CD4-positive, alpha-beta memory T cell (primary cell): ENCODE measurements at regions of chr5 and their contacts with region 1.

Region 1: GRCh38 chr5:76582230-76583162 is 40.7 kb downstream of the F2RL2 start:
- DNase-seq: no peak
- H3K4me3 ChIP-seq: no peak overlapping the region
- H3K4me3 Mint-ChIP-seq: no peak overlapping the region
- H3K27ac ChIP-seq: no peak overlapping the region
- H3K27ac Mint-ChIP-seq: peak overlapping the region in 6 of 7 donors; percentile 12 to 76 (median 46)
- H3K4me1 ChIP-seq: peaks cover 16% of the 10 kb centered on the region
- H3K4me1 Mint-ChIP-seq: peaks cover 13 to 37% (median 18%) of the 10 kb centered on the region in 4 donors
- H3K27me3 ChIP-seq: no peaks in the 10 kb centered on the region
- H3K27me3 Mint-ChIP-seq: no peaks in the 10 kb centered on the region

Region 2: GRCh38 chr5:76074487-76075065 is 507.9 kb before region 1 on chr5:
- CTCF ChIA-PET with region 1: interaction called, 6 read pairs
- POLR2A ChIA-PET with region 1: no interaction called
- intact Hi-C with region 1: loop called (anchors 5 kb)
- DNase-seq: peak in 3 of 5 donors; percentile 22 to 31 (median 24)
- H3K4me3 ChIP-seq: no peak overlapping the region
- H3K4me3 Mint-ChIP-seq: no peak overlapping the region
- H3K27ac ChIP-seq: no peak overlapping the region
- H3K27ac Mint-ChIP-seq: no peak overlapping the region
- H3K4me1 ChIP-seq: no peaks in the 10 kb centered on the region
- H3K4me1 Mint-ChIP-seq: no peaks in the 10 kb centered on the region
- H3K27me3 ChIP-seq: no peaks in the 10 kb centered on the region
- H3K27me3 Mint-ChIP-seq: peaks cover 18 to 53% of the 10 kb centered on the region in 2 donors

Region 3: DNA sequence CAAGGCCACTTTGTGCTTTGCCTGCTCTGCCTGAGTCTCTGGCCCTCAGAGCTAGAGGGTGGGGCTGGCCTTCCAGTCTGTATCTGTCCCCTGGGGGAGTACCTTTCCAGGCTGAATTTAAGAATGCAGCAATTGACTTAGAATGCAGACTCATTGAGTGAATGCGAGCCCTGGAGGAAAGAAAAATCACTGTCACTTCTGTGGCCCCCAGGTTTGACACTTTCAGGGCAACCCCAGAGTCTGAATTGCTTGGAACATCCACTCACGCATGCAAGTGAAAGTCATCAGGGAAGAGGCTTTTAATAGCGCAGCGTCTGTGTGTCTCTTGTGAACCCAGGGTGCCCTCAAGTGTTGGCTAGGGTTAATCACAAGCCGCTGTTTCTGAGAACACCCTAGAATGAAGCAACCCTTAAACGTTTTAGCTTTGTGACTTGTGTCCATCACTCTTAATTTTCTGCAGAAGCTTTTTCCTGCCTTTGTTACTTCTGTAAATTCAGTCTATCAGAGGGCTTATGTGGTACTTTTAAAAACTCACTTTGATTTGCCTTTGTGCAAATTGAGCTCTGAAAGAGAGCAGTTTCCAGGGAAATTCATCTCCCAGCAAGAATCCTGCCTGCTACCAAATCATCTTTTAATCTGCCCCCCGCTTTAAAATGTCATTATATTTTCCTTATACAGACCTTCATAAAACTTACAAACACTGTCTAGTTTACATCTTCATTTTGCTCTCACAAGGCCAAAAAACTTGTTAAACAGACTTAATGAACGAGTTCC is 326.2 kb before region 1 on chr5:
- CTCF ChIA-PET with region 1: interaction called, 12 read pairs
- POLR2A ChIA-PET with region 1: no interaction called
- intact Hi-C with region 1: loop called (anchors 1 kb)
- DNase-seq: peak; percentile 55 to 70 (median 64)
- H3K4me3 ChIP-seq: no peak overlapping the region
- H3K4me3 Mint-ChIP-seq: peak overlapping the region in 4 of 8 donors; percentile 17 to 70 (median 36)
- H3K27ac ChIP-seq: no peak overlapping the region
- H3K27ac Mint-ChIP-seq: peak overlapping the region in 1 of 7 donors; percentile 14
- H3K4me1 ChIP-seq: peaks cover 4% of the 10 kb centered on the region
- H3K4me1 Mint-ChIP-seq: peaks cover 6 to 9% (median 7%) of the 10 kb centered on the region in 4 donors
- H3K27me3 ChIP-seq: no peaks in the 10 kb centered on the region
- H3K27me3 Mint-ChIP-seq: peaks cover 0 to 6% of the 10 kb centered on the region in 2 donors

Region 4: DNA sequence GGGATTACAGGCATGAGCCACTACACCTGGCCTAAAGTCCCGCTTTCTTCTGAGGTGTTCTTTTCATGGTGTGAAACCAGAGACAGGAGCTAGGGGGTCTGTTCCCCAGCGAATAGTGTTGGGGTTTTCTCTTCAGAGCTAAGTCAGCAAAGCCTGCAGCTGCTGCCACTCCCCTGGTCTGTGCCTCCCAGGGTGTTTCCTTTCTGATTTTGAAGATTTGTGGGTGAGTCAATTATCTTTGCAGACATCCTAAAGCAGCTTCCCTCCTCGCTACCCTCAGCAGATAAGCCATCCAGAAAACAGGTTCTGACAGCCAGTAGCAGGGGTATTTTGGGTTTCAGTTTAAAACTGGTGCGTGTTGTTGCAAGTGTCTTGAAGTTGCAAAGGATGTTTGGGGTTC is 251.4 kb before region 1 on chr5:
- CTCF ChIA-PET with region 1: interaction called, 19 read pairs
- POLR2A ChIA-PET with region 1: no interaction called
- intact Hi-C with region 1: no loop called
- DNase-seq: peak; percentile 40 to 67 (median 50)
- H3K4me3 ChIP-seq: no peak overlapping the region
- H3K4me3 Mint-ChIP-seq: peak overlapping the region; percentile 13 to 86 (median 76)
- H3K27ac ChIP-seq: peak overlapping the region; percentile 49
- H3K27ac Mint-ChIP-seq: peak overlapping the region; percentile 87 to 96 (median 93)
- H3K4me1 ChIP-seq: peaks cover 74% of the 10 kb centered on the region
- H3K4me1 Mint-ChIP-seq: peaks cover 62 to 81% (median 71%) of the 10 kb centered on the region in 4 donors
- H3K27me3 ChIP-seq: no peaks in the 10 kb centered on the region
- H3K27me3 Mint-ChIP-seq: no peaks in the 10 kb centered on the region

Region 5: DNA sequence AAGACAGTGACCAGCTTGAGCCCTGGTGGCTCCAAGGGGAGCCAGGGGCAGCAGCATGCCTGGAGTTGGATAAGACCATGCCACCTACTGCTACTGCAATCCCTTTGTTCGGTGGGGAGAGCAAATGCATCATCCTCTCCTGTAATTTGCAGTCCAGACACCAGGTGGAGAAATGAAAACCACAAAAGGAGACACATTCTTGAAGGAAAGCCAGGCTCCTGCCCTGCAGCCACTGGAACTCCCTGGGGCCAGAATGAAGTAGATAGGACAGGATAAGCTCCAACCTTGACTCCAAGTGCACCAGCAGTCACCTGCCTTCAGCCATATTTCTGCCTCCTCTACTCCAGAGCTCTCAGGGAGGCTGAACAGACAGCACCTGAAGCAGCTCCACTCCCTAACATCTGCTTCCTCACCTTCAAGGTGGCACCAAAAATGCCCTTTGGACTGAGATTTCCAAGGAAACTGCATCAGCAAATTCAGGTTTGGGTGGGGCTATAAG is 244.5 kb before region 1 on chr5:
- CTCF ChIA-PET with region 1: interaction called, 19 read pairs
- POLR2A ChIA-PET with region 1: no interaction called
- intact Hi-C with region 1: loop called (anchors 1 kb)
- DNase-seq: peak; percentile 55 to 62 (median 58)
- H3K4me3 ChIP-seq: no peak overlapping the region
- H3K4me3 Mint-ChIP-seq: peak overlapping the region in 4 of 8 donors; percentile 16 to 54 (median 25)
- H3K27ac ChIP-seq: no peak overlapping the region
- H3K27ac Mint-ChIP-seq: peak overlapping the region in 5 of 7 donors; percentile 36 to 70 (median 66)
- H3K4me1 ChIP-seq: peaks cover 33% of the 10 kb centered on the region
- H3K4me1 Mint-ChIP-seq: peaks cover 28 to 42% (median 30%) of the 10 kb centered on the region in 4 donors
- H3K27me3 ChIP-seq: no peaks in the 10 kb centered on the region
- H3K27me3 Mint-ChIP-seq: no peaks in the 10 kb centered on the region

Region 6: DNA sequence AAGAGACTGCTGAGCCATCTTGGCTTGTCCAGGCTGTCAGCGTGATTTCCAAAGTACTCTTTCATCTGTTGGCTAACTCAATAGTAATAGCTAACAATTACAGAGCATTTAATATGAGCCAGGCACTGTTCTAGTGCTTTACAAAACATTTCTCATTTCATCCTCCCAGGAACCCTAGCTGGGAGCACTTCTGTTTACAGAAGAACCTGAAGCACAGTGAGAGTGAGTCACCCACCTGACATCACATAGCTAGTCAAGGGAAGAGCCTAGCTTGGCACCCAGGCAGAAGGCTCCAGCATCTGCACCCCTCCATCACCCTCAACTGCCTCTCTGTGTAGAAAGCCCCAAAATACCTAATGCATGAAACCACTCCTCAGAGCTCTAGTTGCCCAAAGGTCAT is 236.9 kb before region 1 on chr5:
- CTCF ChIA-PET with region 1: interaction called, 11 read pairs
- POLR2A ChIA-PET with region 1: no interaction called
- intact Hi-C with region 1: no loop called
- DNase-seq: no peak
- H3K4me3 ChIP-seq: no peak overlapping the region
- H3K4me3 Mint-ChIP-seq: no peak overlapping the region
- H3K27ac ChIP-seq: no peak overlapping the region
- H3K27ac Mint-ChIP-seq: no peak overlapping the region
- H3K4me1 ChIP-seq: peaks cover 14% of the 10 kb centered on the region
- H3K4me1 Mint-ChIP-seq: peaks cover 10 to 21% (median 11%) of the 10 kb centered on the region in 4 donors
- H3K27me3 ChIP-seq: no peaks in the 10 kb centered on the region
- H3K27me3 Mint-ChIP-seq: no peaks in the 10 kb centered on the region

Region 7: GRCh38 chr5:76571559-76571958 is 10.9 kb before region 1 on chr5:
- CTCF ChIA-PET with region 1: interaction called, 27 read pairs
- POLR2A ChIA-PET with region 1: interaction called, 3 read pairs
- intact Hi-C with region 1: no loop called
- DNase-seq: no peak
- H3K4me3 ChIP-seq: no peak overlapping the region
- H3K4me3 Mint-ChIP-seq: no peak overlapping the region
- H3K27ac ChIP-seq: no peak overlapping the region
- H3K27ac Mint-ChIP-seq: peak overlapping the region in 5 of 7 donors; percentile 2 to 75 (median 37)
- H3K4me1 ChIP-seq: peaks cover 4% of the 10 kb centered on the region
- H3K4me1 Mint-ChIP-seq: peaks cover 17 to 22% (median 20%) of the 10 kb centered on the region in 4 donors
- H3K27me3 ChIP-seq: no peaks in the 10 kb centered on the region
- H3K27me3 Mint-ChIP-seq: no peaks in the 10 kb centered on the region